ENCODE measurements at regions of chr1 and their contacts with region 1.

Region 1: DNA sequence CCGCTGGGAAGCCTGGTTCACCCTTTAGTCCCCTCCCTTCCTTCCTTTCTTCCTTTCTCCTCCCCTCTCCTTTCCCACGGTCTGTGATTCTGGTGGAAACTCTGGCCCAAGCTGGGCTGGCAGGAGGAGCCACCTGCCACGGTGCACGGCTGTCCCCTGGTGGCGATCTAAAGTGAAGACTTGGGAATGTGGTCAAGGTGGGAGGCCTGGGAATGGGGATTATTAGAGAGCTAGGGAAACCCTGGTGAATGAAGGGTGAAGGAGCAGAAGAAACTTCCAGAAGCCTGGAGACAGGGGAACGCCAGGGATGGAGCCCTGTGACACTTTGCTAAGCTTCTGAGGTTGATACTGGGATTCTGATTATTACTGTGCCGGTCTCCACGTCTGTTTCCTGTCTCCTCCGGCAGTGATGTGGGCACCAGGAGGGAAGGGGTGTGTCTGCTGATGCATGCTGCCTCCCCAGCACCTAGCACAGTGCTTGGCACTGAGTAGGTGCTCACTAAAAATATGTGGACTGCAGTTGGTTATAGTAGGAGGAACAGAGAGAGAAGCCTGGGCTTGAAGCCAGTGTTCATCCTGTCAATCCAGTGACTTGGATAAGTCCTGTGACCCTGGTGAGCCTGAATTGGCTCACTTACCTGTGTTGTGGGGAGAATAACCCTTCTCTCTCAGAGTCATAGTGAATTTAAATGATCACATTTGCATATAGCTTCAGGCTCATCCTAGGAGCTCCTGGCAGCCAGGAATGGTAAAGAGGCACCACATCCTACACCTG is 71.2 kb upstream of the NBPF3 start:
- DNase-seq: peak; percentile 84
- ATAC-seq: peak; percentile 95
- H3K4me3 ChIP-seq: no peak overlapping the region
- H3K27ac ChIP-seq: no peak overlapping the region
- H3K4me1 ChIP-seq: no peaks in the 10 kb centered on the region
- H3K27me3 ChIP-seq: no peaks in the 10 kb centered on the region
- CTCF ChIP-seq: peak; percentile 97

Region 2: GRCh38 chr1:21232044-21232443 is 136.7 kb before region 1 on chr1:
- intact Hi-C with region 1: loop called (anchors 5 kb)
- DNase-seq: no peak
- ATAC-seq: peak; percentile 85
- H3K4me3 ChIP-seq: no peak overlapping the region
- H3K27ac ChIP-seq: no peak overlapping the region
- H3K4me1 ChIP-seq: no peaks in the 10 kb centered on the region
- H3K27me3 ChIP-seq: no peaks in the 10 kb centered on the region
- CTCF ChIP-seq: peak; percentile 87

Region 3: GRCh38 chr1:21439721-21440629 is 71.3 kb after region 1 on chr1 and contains the start of gene NBPF3:
- intact Hi-C with region 1: no loop called
- DNase-seq: peak; percentile 95
- ATAC-seq: peak; percentile 97
- H3K4me3 ChIP-seq: peak within 1 kb of the TSS; percentile 71
- H3K27ac ChIP-seq: peak within 1 kb of the TSS; percentile 24
- H3K4me1 ChIP-seq: no peaks in the 10 kb centered on the region
- H3K27me3 ChIP-seq: no peaks in the 10 kb centered on the region
- CTCF ChIP-seq: no peak
- total RNA-seq, gene NBPF3: 6.7 TPM